ENCODE measurements at regions of chr17 and their contacts with region 1.

Region 1: DNA sequence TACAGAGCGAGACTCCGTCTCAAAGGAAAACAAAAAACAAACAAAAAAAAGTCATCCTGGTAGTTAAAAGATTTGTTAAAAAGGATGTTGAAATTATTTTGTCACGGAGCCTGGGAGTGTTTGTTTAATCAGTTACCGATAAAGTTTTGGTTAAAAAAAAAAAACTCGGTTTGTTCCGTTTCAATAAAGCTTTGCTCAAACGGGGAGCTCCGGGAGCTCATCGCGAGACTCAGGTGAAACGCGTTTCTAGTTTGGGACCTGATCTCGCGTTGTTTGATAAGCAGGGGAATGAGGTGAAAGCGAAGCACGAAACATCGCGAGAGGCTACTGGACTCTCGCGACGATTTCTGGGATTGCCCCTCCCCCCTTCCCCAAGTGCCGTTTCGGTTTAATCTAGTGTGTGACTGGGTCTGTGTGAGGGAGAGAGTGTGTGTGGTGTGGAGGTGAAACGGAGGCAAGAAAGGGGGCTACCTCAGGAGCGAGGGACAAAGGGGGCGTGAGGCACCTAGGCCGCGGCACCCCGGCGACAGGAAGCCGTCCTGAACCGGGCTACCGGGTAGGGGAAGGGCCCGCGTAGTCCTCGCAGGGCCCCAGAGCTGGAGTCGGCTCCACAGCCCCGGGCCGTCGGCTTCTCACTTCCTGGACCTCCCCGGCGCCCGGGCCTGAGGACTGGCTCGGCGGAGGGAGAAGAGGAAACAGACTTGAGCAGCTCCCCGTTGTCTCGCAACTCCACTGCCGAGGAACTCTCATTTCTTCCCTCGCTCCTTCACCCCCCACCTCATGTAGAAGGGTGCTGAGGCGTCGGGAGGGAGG is at the start of gene CDK12:
- DNase-seq: peak; percentile 80 to 99 (median 96)
- ATAC-seq: peak; percentile 83 to 85
- H3K4me3 Mint-ChIP-seq: peak within 1 kb of the TSS; percentile 88 to 99 (median 96)
- H3K27ac Mint-ChIP-seq: peak within 1 kb of the TSS; percentile 94 to 100 (median 96)
- H3K4me1 Mint-ChIP-seq: peaks cover 15 to 48% (median 39%) of the 10 kb centered on the region in 4 donors
- H3K27me3 Mint-ChIP-seq: peaks cover 0 to 3% (median 0%) of the 10 kb centered on the region in 5 donors
- polyA plus RNA-seq, gene CDK12: 3.2 to 7.1 (median 5.5) TPM

Region 2: GRCh38 chr17:39401412-39402243 is 59.7 kb before region 1 on chr17 and contains the start of gene FBXL20:
- POLR2A ChIA-PET with region 1: interaction called, 27 read pairs
- DNase-seq: peak; percentile 88 to 98 (median 93)
- ATAC-seq: peak; percentile 76 to 79
- H3K4me3 Mint-ChIP-seq: peak within 1 kb of the TSS; percentile 94 to 99 (median 97)
- H3K27ac Mint-ChIP-seq: peak within 1 kb of the TSS; percentile 95 to 99 (median 96)
- H3K4me1 Mint-ChIP-seq: peaks cover 7 to 51% (median 33%) of the 10 kb centered on the region in 4 donors
- H3K27me3 Mint-ChIP-seq: peaks cover 0 to 1% (median 0%) of the 10 kb centered on the region in 5 donors
- polyA plus RNA-seq, gene FBXL20: 2.6 to 3.4 (median 3.2) TPM

Region 3: GRCh38 chr17:39450847-39451581 is 10.3 kb before region 1 on chr17 and contains the start of gene MED1:
- POLR2A ChIA-PET with region 1: interaction called, 153 read pairs
- DNase-seq: peak; percentile 78 to 95 (median 90)
- ATAC-seq: peak; percentile 92 to 93
- H3K4me3 Mint-ChIP-seq: peak within 1 kb of the TSS; percentile 93 to 99 (median 98)
- H3K27ac Mint-ChIP-seq: peak within 1 kb of the TSS; percentile 97 to 100 (median 99)
- H3K4me1 Mint-ChIP-seq: peaks cover 5 to 42% (median 28%) of the 10 kb centered on the region in 4 donors
- H3K27me3 Mint-ChIP-seq: no peaks in the 10 kb centered on the region
- polyA plus RNA-seq, gene MED1: 16.8 to 26.9 (median 22.2) TPM

Region 4: GRCh38 chr17:39547713-39548478 is 86.6 kb after region 1 on chr17:
- POLR2A ChIA-PET with region 1: no interaction called
- DNase-seq: peak; percentile 49 to 81 (median 72)
- ATAC-seq: peak; percentile 77
- H3K4me3 Mint-ChIP-seq: no peak overlapping the region
- H3K27ac Mint-ChIP-seq: peak overlapping the region in 1 of 10 donors; percentile 27
- H3K4me1 Mint-ChIP-seq: peaks cover 0 to 30% (median 3%) of the 10 kb centered on the region in 4 donors
- H3K27me3 Mint-ChIP-seq: no peaks in the 10 kb centered on the region

Region 5: GRCh38 chr17:39563476-39563875 is 102.2 kb after region 1 on chr17:
- POLR2A ChIA-PET with region 1: no interaction called
- DNase-seq: no peak
- ATAC-seq: no peak
- H3K4me3 Mint-ChIP-seq: no peak overlapping the region
- H3K27ac Mint-ChIP-seq: peak overlapping the region in 1 of 10 donors; percentile 56
- H3K4me1 Mint-ChIP-seq: no peaks in the 10 kb centered on the region
- H3K27me3 Mint-ChIP-seq: no peaks in the 10 kb centered on the region

Measured in naive thymus-derived CD8-positive, alpha-beta T cell (primary cell).